CD4-positive, alpha-beta T cell (primary cell): ENCODE measurements at regions of chr1 and their contacts with region 1.

Region 1: DNA sequence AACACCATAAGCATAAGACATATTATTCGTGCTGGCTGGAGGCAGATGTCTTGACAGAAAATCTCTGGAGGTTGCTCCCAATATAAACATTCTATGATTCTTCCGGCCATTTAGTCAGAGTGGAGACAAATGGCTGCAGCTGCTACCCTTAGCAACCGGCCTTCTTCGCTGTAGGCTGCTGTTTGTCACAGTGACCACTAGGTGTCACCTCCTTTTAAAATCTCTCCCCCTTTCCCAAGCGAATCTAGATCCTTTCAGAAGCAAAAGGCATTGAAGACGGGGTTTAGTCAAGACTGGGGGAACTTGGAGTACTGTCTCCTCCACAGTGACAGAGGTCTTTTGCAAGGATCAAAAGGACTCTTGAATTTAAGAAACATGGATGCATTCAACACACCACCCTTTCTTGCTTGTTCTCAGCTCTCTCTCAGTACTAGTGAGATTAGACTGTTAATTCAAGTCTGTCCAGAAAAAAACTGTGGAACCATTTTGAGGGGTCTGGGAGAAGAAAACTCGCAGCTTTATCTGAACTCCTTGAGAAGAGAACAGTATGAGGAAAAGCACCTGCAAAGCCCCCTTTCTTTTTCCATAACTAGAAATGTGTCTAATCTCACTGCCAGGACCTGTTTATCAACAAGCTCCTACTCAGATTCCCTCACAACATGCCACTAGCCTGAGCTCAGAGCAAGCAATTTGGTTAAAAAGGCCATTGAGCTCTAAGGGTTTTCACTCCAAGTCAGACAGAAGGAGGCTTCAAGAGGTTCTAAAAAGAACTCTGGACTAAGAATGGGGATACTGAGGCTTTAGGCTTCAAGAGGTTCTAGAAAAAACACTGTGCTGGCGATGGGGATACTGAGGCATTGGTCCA is 408.3 kb upstream of the PLXNA2 start:
- DNase-seq: peak in 6 of 14 experiments; percentile 1 to 38 (median 20)
- ATAC-seq: no peak
- H3K4me3 ChIP-seq: no peak overlapping the region
- H3K4me3 Mint-ChIP-seq: no peak overlapping the region
- H3K27ac ChIP-seq: no peak overlapping the region
- H3K27ac Mint-ChIP-seq: no peak overlapping the region
- H3K4me1 ChIP-seq: no peaks in the 10 kb centered on the region
- H3K4me1 Mint-ChIP-seq: no peaks in the 10 kb centered on the region
- H3K27me3 ChIP-seq: peaks cover 11 to 12% of the 10 kb centered on the region in 2 experiments
- H3K27me3 Mint-ChIP-seq: peaks cover 58% of the 10 kb centered on the region
- CTCF ChIP-seq: peak; percentile 74

Region 2: DNA sequence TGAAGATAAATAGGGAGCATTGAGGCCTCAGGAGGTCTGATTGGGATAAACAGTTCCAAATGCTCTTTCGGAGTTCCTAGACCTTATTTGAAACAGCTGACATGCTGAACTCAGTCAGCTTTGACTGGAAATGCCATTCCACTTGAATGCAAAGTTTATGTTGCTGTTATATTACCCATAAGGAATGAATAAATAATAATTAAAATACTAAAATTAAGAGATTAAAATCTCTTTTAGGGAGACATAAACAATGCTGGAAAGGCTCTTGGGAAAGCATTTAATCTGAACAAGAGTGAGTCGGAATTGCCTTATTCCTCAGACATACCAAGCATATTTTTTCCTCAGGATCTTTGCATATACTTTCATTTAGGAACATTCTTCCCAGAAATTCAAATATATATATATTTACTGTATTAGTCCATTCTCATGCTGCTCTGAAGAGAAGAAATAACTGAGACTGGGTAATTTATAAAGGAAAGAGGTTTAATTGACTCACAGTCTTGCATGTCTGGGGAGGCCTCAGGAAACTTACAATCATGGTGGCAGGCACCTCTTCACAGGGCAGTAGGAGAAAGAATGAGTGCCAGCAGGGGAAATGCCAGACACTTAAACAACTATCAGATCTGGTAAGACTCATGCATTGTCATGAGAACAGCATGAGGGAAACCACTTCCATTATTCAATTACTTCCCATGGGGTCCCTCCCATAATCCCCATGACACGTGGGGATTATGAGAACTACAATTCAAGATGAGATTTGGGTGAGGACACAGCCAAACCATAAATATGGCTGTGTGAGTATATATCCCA is 90.2 kb before region 1 on chr1:
- CTCF ChIA-PET with region 1: no interaction called
- POLR2A ChIA-PET with region 1: no interaction called
- intact Hi-C with region 1: no loop called
- DNase-seq: no peak
- ATAC-seq: no peak
- H3K4me3 ChIP-seq: no peak overlapping the region
- H3K4me3 Mint-ChIP-seq: no peak overlapping the region
- H3K27ac ChIP-seq: no peak overlapping the region
- H3K27ac Mint-ChIP-seq: no peak overlapping the region
- H3K4me1 ChIP-seq: no peaks in the 10 kb centered on the region
- H3K4me1 Mint-ChIP-seq: no peaks in the 10 kb centered on the region
- H3K27me3 ChIP-seq: peaks cover 0 to 1% of the 10 kb centered on the region in 2 experiments
- H3K27me3 Mint-ChIP-seq: no peaks in the 10 kb centered on the region
- CTCF ChIP-seq: no peak

Region 3: DNA sequence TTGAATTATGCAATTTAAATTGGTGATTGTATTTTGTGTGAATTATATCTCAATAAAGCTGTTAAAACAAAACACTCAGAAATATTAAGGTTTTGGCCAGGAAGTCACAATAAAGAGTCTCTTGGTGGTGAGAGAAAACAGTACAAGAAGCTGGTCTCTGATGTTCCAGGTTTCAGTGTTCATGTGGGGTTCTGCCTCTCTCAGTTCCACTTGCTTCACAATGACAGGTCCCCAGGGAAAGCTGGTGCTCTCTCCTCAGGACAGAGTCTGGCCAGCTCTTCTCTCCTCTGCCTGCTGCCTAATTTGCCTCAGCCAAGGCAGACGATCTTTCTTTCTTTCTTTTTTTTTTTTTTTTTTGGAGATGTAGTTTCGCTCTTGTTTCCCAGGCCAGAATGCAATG is 65.4 kb before region 1 on chr1:
- CTCF ChIA-PET with region 1: no interaction called
- POLR2A ChIA-PET with region 1: no interaction called
- intact Hi-C with region 1: no loop called
- DNase-seq: no peak
- ATAC-seq: no peak
- H3K4me3 ChIP-seq: no peak overlapping the region
- H3K4me3 Mint-ChIP-seq: no peak overlapping the region
- H3K27ac ChIP-seq: no peak overlapping the region
- H3K27ac Mint-ChIP-seq: no peak overlapping the region
- H3K4me1 ChIP-seq: no peaks in the 10 kb centered on the region
- H3K4me1 Mint-ChIP-seq: no peaks in the 10 kb centered on the region
- H3K27me3 ChIP-seq: peaks cover 0 to 5% of the 10 kb centered on the region in 2 experiments
- H3K27me3 Mint-ChIP-seq: no peaks in the 10 kb centered on the region
- CTCF ChIP-seq: no peak

Region 4: DNA sequence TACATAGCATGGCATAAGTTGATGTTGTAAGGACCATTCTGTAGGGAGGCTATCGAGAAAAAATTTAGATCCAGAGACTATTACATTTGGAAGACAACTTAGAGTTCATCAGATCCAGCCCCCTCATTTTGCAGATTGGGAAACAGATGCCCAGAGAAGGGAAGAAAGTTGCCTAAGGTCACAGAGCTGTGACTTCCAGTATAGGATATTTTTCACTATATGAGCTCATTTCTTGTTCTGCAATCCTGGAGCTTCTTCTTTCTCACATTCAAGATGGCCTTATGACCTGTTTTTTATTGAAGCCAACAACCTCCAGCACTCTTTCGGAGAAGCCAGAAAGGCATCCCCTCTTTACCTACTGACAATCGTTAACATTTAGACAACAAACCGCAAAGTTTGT is 13.4 kb after region 1 on chr1:
- CTCF ChIA-PET with region 1: no interaction called
- POLR2A ChIA-PET with region 1: no interaction called
- intact Hi-C with region 1: no loop called
- DNase-seq: no peak
- ATAC-seq: no peak
- H3K4me3 ChIP-seq: no peak overlapping the region
- H3K4me3 Mint-ChIP-seq: no peak overlapping the region
- H3K27ac ChIP-seq: no peak overlapping the region
- H3K27ac Mint-ChIP-seq: no peak overlapping the region
- H3K4me1 ChIP-seq: no peaks in the 10 kb centered on the region
- H3K4me1 Mint-ChIP-seq: no peaks in the 10 kb centered on the region
- H3K27me3 ChIP-seq: no peaks in the 10 kb centered on the region
- H3K27me3 Mint-ChIP-seq: peaks cover 12% of the 10 kb centered on the region
- CTCF ChIP-seq: no peak

Region 5: DNA sequence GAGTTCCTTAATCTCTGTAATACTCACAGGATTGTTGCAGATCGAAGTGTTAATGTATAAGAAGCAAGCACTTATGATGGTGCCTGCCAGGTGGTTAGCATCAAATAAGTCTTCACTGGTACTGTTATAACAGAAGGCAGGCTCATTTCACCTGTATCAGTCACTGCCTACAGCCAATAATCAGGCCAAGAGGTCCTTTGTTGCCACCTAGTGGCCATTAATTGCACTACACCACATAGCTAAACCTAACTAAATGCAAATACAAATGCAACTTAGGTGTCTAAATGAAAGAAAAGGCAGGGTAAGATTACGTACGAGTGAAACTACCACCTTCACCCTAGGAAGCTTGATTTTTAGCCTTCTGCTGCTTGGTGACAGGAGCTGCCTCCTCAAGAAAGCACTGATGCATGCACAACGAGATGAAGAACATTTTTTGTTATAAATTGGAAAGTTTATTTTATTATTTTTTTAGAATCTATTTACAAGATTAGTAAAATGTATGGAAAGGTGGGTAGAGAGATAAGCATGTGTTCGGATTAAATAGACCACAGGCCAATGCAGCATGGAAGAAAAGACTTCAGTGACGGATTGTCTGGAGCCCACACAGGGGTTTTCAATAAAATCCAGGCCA is 596.2 kb after region 1 on chr1:
- CTCF ChIA-PET with region 1: no interaction called
- POLR2A ChIA-PET with region 1: no interaction called
- intact Hi-C with region 1: loop called in 1 of 2 experiments (anchors 10 kb)
- DNase-seq: peak in 12 of 14 experiments; percentile 5 to 62 (median 18)
- ATAC-seq: peak; percentile 63
- H3K4me3 ChIP-seq: no peak overlapping the region
- H3K4me3 Mint-ChIP-seq: no peak overlapping the region
- H3K27ac ChIP-seq: no peak overlapping the region
- H3K27ac Mint-ChIP-seq: no peak overlapping the region
- H3K4me1 ChIP-seq: no peaks in the 10 kb centered on the region
- H3K4me1 Mint-ChIP-seq: no peaks in the 10 kb centered on the region
- H3K27me3 ChIP-seq: no peaks in the 10 kb centered on the region
- H3K27me3 Mint-ChIP-seq: no peaks in the 10 kb centered on the region
- CTCF ChIP-seq: peak; percentile 93

Region 6: DNA sequence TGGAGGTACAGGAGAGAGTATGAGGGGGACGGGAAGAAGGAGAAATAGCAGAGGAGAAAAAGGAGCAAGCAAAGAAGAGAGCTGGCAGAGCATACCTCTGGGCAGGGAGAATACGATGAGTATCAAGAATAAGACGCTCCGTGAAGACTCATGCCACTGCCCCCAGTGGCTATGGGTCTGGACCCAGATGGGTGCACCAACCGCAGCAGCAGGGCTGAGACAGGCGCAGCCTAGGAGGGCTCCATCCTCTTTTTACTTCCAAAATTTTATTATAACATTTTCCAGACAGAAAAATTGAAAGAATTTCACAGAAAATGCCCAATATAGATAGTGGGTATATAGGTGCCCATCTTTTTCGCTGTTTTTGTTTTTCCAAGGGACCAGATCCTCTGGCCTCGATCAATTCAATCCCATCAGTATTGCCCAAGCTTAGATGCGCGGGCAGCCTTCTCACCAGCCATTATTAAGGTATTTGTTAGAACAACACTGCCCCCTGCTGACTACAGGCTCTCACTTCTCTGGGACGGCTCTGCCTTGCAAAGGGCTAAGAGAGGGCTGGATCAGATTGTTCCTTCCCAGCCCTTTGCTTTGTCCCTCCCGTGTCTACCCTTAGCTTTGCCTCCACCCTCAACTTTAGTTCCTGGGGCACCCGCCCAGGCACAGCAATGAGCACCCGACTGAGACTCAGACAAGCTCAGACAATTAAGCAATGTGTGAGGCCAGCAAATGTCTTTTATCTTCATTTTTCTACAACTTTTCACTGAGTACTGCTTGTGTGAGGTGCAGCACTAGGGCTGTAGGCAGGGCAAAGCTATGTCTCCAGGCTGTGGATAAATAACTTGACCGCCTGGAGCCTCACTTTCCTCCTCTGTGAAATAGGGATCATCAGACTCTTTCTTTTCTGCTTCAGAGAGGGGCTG is 913.5 kb after region 1 on chr1:
- CTCF ChIA-PET with region 1: interaction called, 3 read pairs
- POLR2A ChIA-PET with region 1: no interaction called
- intact Hi-C with region 1: loop called (anchors 5 kb)
- DNase-seq: peak; percentile 49 to 84 (median 62)
- ATAC-seq: peak; percentile 89
- H3K4me3 ChIP-seq: no peak overlapping the region
- H3K4me3 Mint-ChIP-seq: no peak overlapping the region
- H3K27ac ChIP-seq: no peak overlapping the region
- H3K27ac Mint-ChIP-seq: no peak overlapping the region
- H3K4me1 ChIP-seq: peaks cover 8% of the 10 kb centered on the region
- H3K4me1 Mint-ChIP-seq: peaks cover 12% of the 10 kb centered on the region
- H3K27me3 ChIP-seq: no peaks in the 10 kb centered on the region
- H3K27me3 Mint-ChIP-seq: peaks cover 67% of the 10 kb centered on the region
- CTCF ChIP-seq: peak; percentile 74